ENCODE measurements at regions of chr13 and their contacts with region 1.

Region 1: DNA sequence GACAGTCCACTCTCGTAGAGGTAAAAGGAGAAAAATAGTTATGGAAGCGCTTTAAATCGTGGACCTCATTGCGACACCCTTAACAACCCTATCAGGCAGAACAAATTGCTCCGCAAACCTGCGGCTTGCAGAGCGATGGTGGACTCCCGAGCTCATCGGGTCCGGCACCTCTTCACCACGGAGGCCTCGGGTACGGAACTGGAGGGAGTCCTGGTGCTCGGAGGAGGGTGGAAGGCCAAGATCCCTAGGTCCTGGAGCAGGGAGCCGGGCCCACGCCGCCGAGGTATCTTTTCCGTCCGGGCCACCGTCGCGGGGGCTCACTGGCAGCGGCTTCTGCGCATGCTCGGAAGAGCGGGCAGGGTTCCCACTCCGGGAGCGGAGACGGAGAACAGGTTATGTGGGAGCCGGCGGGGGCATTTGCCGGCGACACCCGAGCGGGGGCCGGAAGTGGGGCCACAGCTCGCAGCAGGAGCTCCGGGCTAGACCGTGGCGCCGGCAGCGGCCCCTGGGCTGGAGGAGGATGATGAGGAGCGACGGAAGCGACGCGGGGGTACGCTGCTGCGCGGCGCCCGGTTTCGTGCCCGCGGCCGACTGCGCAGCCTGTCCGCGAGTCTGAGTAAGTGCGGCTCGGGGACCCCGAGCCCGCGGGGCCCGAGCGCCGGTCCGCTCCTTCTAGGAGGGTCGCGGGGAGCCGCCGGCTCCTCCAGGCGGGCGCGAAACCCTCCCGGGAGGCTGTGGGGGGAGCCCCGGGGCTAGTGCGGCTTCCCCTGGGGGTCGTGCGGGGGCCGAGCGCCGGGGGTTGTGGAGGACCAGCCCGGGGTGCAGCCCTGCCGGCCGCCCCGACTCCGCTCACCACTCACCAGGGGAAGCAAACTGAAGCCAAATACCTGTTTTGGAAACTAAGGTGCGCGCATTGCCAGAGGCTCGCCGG is at the start of gene ABHD13:
- DNase-seq: peak; percentile 87 to 92 (median 89)
- ATAC-seq: peak; percentile 89
- H3K4me3 ChIP-seq: peak within 1 kb of the TSS; percentile 89
- H3K27ac ChIP-seq: peak within 1 kb of the TSS; percentile 92
- H3K4me1 ChIP-seq: peaks cover 3 to 9% of the 10 kb centered on the region in 2 experiments; a peak in 3 of 5 replicates
- H3K27me3 ChIP-seq: no peaks in the 10 kb centered on the region
- CTCF ChIP-seq: peak in 1 of 3 experiments; percentile 21; a peak in 1 of 6 replicates
- EP300 ChIP-seq: no peak
- POLR2A ChIP-seq: peak; percentile 75
- RAD21 ChIP-seq: no peak
- polyA plus RNA-seq, gene ABHD13: 1.7 to 2.7 TPM

Region 2: GRCh38 chr13:108176685-108177274 is 41.5 kb before region 1 on chr13:
- CTCF ChIA-PET with region 1: no interaction called
- POLR2A ChIA-PET with region 1: no interaction called
- in situ Hi-C with region 1: no loop called
- intact Hi-C with region 1: loop called (anchors 2 kb)
- DNase-seq: peak; percentile 25 to 60 (median 32)
- ATAC-seq: peak; percentile 74
- H3K4me3 ChIP-seq: no peak overlapping the region
- H3K27ac ChIP-seq: no peak overlapping the region
- H3K4me1 ChIP-seq: no peaks in the 10 kb centered on the region
- H3K27me3 ChIP-seq: no peaks in the 10 kb centered on the region
- CTCF ChIP-seq: peak; percentile 25 to 42 (median 41); a peak in 5 of 6 replicates
- EP300 ChIP-seq: no peak
- POLR2A ChIP-seq: no peak
- RAD21 ChIP-seq: 0 out of 4 replicates have a peak, but pooled peaks of 1 of the 2 experiments have one; percentile 5

Measured in K562 (cell line).